ENCODE measurements at regions of chr2 and their contacts with region 1.

Region 1: DNA sequence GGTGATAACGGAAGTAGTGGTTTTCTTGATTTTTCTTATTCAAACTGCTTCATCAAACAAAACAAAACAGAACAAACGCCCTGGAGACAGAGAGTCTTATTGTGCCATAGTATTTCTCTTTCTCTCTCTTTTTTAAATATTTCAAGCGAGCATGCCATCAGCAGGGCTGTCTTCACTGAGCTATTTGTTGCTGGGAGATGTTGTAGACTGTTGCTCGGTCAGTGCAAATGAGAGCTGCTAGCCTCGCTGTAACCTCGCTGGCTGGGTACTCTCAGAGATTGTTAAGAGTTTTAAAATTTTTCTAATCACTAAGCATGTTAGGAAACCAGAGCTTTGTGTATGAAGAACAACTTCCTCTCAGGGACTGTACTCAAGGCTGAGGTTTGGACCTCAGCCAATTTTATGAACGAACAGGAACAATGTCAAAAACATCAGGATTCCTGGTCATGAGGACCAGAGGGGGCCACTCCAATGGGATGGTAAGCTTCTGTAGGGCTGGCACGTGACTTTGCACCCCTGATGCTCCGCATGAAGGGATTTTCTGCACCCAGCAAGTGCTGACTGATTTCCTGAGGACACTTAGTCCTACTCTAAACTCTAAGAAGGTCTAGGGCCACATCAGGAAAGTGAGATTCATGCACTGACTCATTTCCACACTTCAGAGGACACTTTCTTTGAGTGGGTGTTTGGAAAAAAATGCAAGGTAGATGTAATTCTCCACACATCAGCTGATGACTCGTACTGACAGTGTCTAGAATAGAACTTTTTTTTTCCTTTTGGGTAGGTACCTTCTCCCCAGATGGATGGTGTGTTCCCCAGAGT is 59.8 kb upstream of the IL1R1 start:
- DNase-seq: peak; percentile 88
- H3K4me3 ChIP-seq: peak overlapping the region in 1 of 3 experiments; percentile 19
- H3K27ac ChIP-seq: peak overlapping the region; percentile 60
- H3K4me1 ChIP-seq: peaks cover 20% of the 10 kb centered on the region
- H3K27me3 ChIP-seq: no peaks in the 10 kb centered on the region
- CTCF ChIP-seq: no peak
- POLR2A ChIP-seq: no peak

Region 2: DNA sequence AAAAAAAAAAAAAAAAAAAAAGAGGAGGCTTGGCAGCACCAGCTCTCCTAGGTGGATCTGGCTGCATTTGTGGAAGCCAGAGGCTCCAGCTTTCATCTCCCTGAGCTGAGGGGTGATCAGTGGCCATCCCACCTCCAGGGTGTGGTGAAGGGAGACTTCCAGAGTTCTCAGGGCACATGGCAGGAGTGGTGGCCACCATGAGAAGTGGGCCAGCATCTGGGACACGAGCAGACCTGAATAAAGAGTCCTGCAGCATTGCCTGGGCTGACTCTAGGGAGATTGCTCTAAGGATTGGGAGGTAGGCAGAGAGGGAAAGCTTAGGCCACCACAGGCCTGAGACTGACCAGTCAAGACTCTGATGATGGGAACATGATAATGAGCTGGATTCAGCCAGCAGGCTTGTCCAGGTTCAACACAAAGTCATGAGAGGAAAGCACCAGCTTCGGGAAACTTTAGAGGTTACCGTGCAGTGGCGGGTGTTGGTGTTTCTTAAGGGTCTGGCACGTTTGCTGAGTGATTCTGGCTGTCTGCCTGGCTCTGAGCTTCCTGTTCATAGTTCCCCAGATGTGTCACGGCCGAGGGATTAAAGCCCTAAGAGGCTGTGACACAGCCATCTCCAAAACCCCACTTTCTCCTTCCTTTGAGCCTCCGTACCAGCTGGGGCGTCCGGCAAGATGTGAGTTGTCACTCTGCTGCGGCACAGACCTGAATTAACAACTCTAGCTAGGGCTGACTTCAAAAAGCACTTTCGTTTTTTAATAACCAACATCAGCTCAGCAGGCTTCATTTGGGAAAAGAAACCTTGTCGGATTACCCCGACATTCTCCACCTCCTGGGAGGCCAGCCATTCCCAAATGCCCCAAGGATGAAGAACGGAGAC is 21.4 kb after region 1 on chr2:
- CTCF ChIA-PET with region 1: interaction called, 6 read pairs
- POLR2A ChIA-PET with region 1: no interaction called
- dilution Hi-C with region 1: no loop called
- intact Hi-C with region 1: loop called (anchors 1 kb)
- DNase-seq: peak; percentile 79
- H3K4me3 ChIP-seq: peak overlapping the region; percentile 24 to 59 (median 32)
- H3K27ac ChIP-seq: peak overlapping the region; percentile 16
- H3K4me1 ChIP-seq: peaks cover 10% of the 10 kb centered on the region
- H3K27me3 ChIP-seq: no peaks in the 10 kb centered on the region
- CTCF ChIP-seq: no peak
- POLR2A ChIP-seq: no peak

Measured in endothelial cell of umbilical vein (primary cell).